H1 (cell line): ENCODE measurements at regions of chr6 and their contacts with region 1.

Region 1: DNA sequence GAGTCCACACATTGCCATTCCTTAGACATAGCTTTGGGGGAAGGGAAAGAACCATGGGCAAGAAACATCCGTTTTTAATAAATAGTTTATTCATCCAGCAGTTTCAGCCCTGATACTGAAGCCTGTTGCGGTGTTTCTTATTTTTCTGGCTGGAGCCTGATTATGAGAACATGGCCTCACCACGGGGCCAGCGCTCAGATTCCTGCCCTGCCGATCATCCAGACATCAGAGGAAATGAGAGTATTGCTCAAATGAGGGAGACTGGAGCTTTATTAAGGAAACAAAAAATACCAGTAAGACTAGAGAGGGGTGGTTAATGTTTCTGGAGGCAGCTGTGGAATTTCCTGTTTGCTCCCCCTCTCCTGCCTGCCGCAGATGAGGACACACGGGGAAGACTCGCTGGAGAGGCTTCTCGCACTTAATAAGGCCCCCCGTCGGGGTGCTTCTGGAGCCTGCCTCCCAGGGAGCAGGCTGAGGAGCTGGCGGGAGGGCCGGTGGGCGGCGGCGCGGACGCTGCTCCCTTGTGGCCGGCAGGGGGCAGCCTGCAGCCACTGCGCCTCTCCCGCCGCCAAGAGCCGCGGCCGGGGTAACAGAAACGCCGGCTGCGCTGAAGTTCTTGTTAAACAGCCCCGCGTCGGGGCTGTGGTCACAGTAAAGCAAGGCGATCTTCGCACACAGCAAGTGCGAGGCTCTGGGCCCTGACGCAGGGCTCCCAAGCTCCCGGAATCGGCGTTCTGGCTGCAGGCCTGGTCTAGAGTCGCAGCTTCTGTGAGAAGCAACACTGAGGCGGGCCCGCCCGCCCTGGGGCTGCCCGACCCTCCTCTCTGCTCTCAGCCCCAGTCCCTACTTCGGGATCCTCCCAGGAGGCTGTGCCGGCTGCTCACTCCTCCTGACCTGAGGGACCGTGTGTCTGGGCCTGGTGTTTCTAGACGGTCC is 17.5 kb downstream of the LEMD2 start:
- DNase-seq: peak; percentile 86 to 87
- H3K4me3 ChIP-seq: peak overlapping the region in 3 of 4 experiments; percentile 4 to 16 (median 14); a peak in 3 of 8 replicates
- H3K27ac ChIP-seq: no peak overlapping the region
- H3K4me1 ChIP-seq: peaks cover 10 to 32% (median 21%) of the 10 kb centered on the region in 4 experiments
- H3K27me3 ChIP-seq: no peaks in the 10 kb centered on the region
- CTCF ChIP-seq: peak in 2 of 3 experiments; percentile 76 to 95; a peak in 3 of 4 replicates
- EP300 ChIP-seq: no peak
- POLR2A ChIP-seq: 0 out of 3 replicates have a peak, but pooled peaks of 1 of the 2 experiments have one; percentile 45
- RAD21 ChIP-seq: peak; percentile 86 to 91

Region 2: GRCh38 chr6:33744001-33744848 is 27.2 kb before region 1 on chr6:
- CTCF ChIA-PET with region 1: interaction called, 157 read pairs
- POLR2A ChIA-PET with region 1: interaction called, 14 read pairs
- DNase-seq: peak; percentile 62 to 90
- H3K4me3 ChIP-seq: no peak overlapping the region
- H3K27ac ChIP-seq: no peak overlapping the region
- H3K4me1 ChIP-seq: peaks cover 7 to 35% (median 23%) of the 10 kb centered on the region in 4 experiments
- H3K27me3 ChIP-seq: no peaks in the 10 kb centered on the region; a peak in 2 of 7 replicates
- CTCF ChIP-seq: peak in 2 of 3 experiments; percentile 96 to 99; a peak in 3 of 4 replicates
- EP300 ChIP-seq: no peak
- POLR2A ChIP-seq: no peak
- RAD21 ChIP-seq: peak; percentile 86 to 90

Region 3: GRCh38 chr6:33802186-33803064 is 31.0 kb after region 1 on chr6:
- CTCF ChIA-PET with region 1: interaction called, 71 read pairs
- POLR2A ChIA-PET with region 1: interaction called, 6 read pairs
- DNase-seq: no peak
- H3K4me3 ChIP-seq: no peak overlapping the region
- H3K27ac ChIP-seq: no peak overlapping the region
- H3K4me1 ChIP-seq: peaks cover 0 to 10% (median 3%) of the 10 kb centered on the region in 4 experiments; a peak in 5 of 7 replicates
- H3K27me3 ChIP-seq: peaks cover 0 to 6% (median 1%) of the 10 kb centered on the region in 4 experiments; a peak in 3 of 7 replicates
- CTCF ChIP-seq: no peak
- EP300 ChIP-seq: no peak
- POLR2A ChIP-seq: no peak
- RAD21 ChIP-seq: no peak

Region 4: GRCh38 chr6:33840048-33840926 is 68.9 kb after region 1 on chr6:
- CTCF ChIA-PET with region 1: interaction called, 49 read pairs
- POLR2A ChIA-PET with region 1: interaction called, 3 read pairs
- DNase-seq: no peak
- H3K4me3 ChIP-seq: no peak overlapping the region
- H3K27ac ChIP-seq: no peak overlapping the region
- H3K4me1 ChIP-seq: peaks cover 0 to 19% (median 11%) of the 10 kb centered on the region in 4 experiments; a peak in 6 of 7 replicates
- H3K27me3 ChIP-seq: 0 out of 7 replicates have a peak, but pooled peaks cover 0 to 3% (median 0%) of the 10 kb centered on the region in 4 experiments
- CTCF ChIP-seq: no peak
- EP300 ChIP-seq: no peak
- POLR2A ChIP-seq: no peak
- RAD21 ChIP-seq: no peak

Region 5: GRCh38 chr6:33935439-33936080 is 164.1 kb after region 1 on chr6:
- CTCF ChIA-PET with region 1: interaction called, 11 read pairs
- POLR2A ChIA-PET with region 1: no interaction called
- DNase-seq: no peak
- H3K4me3 ChIP-seq: no peak overlapping the region
- H3K27ac ChIP-seq: no peak overlapping the region
- H3K4me1 ChIP-seq: peaks cover 0 to 10% (median 4%) of the 10 kb centered on the region in 4 experiments; a peak in 4 of 7 replicates
- H3K27me3 ChIP-seq: no peaks in the 10 kb centered on the region; a peak in 1 of 7 replicates
- CTCF ChIP-seq: peak in 1 of 3 experiments; percentile 9; a peak in 1 of 4 replicates
- EP300 ChIP-seq: no peak
- POLR2A ChIP-seq: no peak
- RAD21 ChIP-seq: peak in 1 of 2 experiments; percentile 20; a peak in 1 of 4 replicates

Region 6: DNA sequence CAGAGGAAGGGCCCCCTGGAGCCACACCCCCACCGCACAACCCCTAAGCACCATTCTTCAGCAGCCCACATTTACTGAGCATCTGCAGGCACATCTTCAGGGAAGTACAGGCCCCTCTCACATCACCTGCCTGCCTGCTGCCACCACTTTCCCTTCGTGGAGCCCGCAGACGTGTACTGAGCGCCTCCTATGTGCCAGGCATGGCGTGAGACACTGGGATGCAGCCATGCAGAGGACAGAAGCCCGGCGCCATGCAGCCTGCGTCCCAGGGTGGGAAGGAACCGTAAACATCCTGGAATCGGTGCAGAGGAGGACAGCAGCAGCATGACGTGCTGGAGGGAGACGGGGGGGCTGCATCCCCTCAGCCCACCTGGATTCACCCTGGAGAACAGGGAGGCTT is 296.4 kb after region 1 on chr6:
- CTCF ChIA-PET with region 1: interaction called, 11 read pairs
- POLR2A ChIA-PET with region 1: interaction called, 3 read pairs
- DNase-seq: no peak
- H3K4me3 ChIP-seq: no peak overlapping the region
- H3K27ac ChIP-seq: no peak overlapping the region
- H3K4me1 ChIP-seq: peaks cover 0 to 14% (median 7%) of the 10 kb centered on the region in 4 experiments; a peak in 6 of 7 replicates
- H3K27me3 ChIP-seq: no peaks in the 10 kb centered on the region
- CTCF ChIP-seq: peak in 2 of 3 experiments; percentile 48 to 50; a peak in 3 of 4 replicates
- EP300 ChIP-seq: no peak
- POLR2A ChIP-seq: no peak
- RAD21 ChIP-seq: peak; percentile 31 to 56